CD4-positive, alpha-beta T cell (primary cell): ENCODE measurements at regions of chr1 and their contacts with region 1.

Region 1: GRCh38 chr1:161139765-161140164 is 7.3 kb upstream of the DEDD start:
- DNase-seq: peak in 8 of 14 experiments; percentile 26 to 73 (median 50)
- ATAC-seq: peak; percentile 72
- H3K4me3 ChIP-seq: no peak overlapping the region
- H3K4me3 Mint-ChIP-seq: no peak overlapping the region
- H3K27ac ChIP-seq: no peak overlapping the region
- H3K27ac Mint-ChIP-seq: no peak overlapping the region
- H3K4me1 ChIP-seq: peaks cover 2% of the 10 kb centered on the region
- H3K4me1 Mint-ChIP-seq: peaks cover 6% of the 10 kb centered on the region
- H3K27me3 ChIP-seq: no peaks in the 10 kb centered on the region
- H3K27me3 Mint-ChIP-seq: no peaks in the 10 kb centered on the region
- CTCF ChIP-seq: peak; percentile 67

Region 2: GRCh38 chr1:160494620-160495019 is 645.1 kb before region 1 on chr1:
- CTCF ChIA-PET with region 1: no interaction called
- POLR2A ChIA-PET with region 1: no interaction called
- intact Hi-C with region 1: loop called in 1 of 2 experiments (anchors 10 kb)
- DNase-seq: peak in 3 of 14 experiments; percentile 18 to 43 (median 30)
- ATAC-seq: no peak
- H3K4me3 ChIP-seq: no peak overlapping the region
- H3K4me3 Mint-ChIP-seq: no peak overlapping the region
- H3K27ac ChIP-seq: no peak overlapping the region
- H3K27ac Mint-ChIP-seq: no peak overlapping the region
- H3K4me1 ChIP-seq: no peaks in the 10 kb centered on the region
- H3K4me1 Mint-ChIP-seq: peaks cover 15% of the 10 kb centered on the region
- H3K27me3 ChIP-seq: no peaks in the 10 kb centered on the region
- H3K27me3 Mint-ChIP-seq: no peaks in the 10 kb centered on the region
- CTCF ChIP-seq: peak; percentile 11